ENCODE measurements at regions of chr6 and their contacts with region 1.

Region 1: DNA sequence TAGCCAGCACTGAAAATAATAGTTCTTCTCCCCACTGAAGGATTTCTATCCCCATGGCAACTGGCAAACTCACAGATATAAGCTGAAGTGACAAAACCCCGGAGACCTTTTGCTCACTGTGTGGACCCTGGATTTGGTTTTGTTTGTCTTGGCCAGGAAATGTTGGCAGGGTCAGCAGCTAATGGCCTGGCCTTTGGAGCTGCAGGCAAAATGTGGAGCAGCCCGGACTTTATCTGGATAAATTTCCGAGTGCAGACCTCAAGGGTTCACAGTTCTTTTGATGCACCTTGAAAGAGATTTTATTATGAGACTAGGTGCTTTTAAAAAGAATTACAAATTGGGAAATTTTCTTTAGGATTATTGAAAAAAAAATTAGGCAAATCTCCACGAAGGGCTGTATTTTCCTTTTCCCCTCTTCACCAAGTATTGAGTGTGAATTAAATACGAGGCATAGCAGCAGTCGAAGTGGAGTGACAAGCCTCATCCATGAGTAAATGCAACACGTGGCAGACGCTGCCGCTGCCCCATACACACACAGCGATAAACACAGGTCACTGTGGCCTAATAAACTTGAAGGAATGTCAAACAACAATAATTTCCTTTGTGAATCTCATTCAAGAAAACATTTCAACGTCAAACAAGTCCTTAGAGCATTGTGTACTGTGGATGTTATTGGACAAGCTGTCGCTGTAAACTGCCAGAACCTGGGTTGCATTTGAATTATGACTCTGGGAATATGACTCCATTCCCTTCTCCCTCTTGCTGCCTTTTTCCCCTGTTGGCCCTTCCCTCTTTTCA is 35.1 kb upstream of the CCN6 start:
- DNase-seq: peak; percentile 61
- H3K4me3 ChIP-seq: no peak overlapping the region
- H3K27ac ChIP-seq: peak overlapping the region in 1 of 2 experiments; percentile 14; a peak in 1 of 4 replicates
- H3K4me1 ChIP-seq: peaks cover 0 to 26% of the 10 kb centered on the region in 2 experiments; a peak in 2 of 4 replicates
- H3K27me3 ChIP-seq: no peaks in the 10 kb centered on the region
- CTCF ChIP-seq: no peak
- EP300 ChIP-seq: peak in 1 of 2 experiments; percentile 20; a peak in 1 of 4 replicates
- RAD21 ChIP-seq: no peak

Region 2: DNA sequence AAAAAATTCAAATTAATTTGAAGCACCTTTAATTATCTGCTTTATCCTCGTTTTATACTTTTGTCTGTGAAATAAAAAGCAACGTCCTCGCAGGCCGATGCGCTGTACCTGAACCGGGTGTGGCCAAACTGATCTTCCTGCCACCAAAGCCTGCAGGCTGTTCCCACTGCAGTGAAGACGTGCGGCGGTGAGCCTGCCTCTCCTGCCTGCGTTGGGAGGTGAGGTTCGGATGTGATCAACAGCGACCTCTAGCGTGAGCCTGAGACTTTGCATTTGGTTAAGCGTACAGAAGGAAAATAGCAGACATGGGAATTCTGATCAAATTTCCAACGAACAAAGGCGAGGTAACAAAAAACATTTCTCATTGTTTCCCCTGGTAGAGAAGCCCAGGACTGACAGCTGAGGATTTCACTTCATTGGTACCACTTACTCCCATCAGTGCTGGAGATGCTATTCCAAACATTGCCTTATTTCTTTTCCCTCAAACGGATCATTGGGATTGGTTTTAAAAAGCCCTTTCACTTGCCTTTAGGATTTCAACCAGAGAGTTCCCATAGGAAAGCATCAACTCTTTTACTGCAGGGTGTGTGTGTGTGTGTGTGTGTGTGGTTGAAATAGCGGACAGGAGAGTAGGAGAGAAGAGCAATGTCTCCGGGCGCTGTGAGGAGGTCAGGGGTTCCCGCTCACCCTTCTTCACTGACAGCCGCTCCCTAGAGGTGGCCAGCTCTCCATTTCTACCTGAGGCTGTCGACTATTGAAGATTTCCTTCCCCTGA is 21.6 kb before region 1 on chr6:
- CTCF ChIA-PET with region 1: interaction called, 20 read pairs
- POLR2A ChIA-PET with region 1: no interaction called
- DNase-seq: peak; percentile 76
- H3K4me3 ChIP-seq: peak overlapping the region in 1 of 2 experiments; percentile 40; a peak in 1 of 4 replicates
- H3K27ac ChIP-seq: no peak overlapping the region
- H3K4me1 ChIP-seq: peaks cover 4 to 12% of the 10 kb centered on the region in 2 experiments; a peak in 1 of 4 replicates
- H3K27me3 ChIP-seq: no peaks in the 10 kb centered on the region
- CTCF ChIP-seq: peak; percentile 90
- EP300 ChIP-seq: no peak
- RAD21 ChIP-seq: peak; percentile 99

Region 3: DNA sequence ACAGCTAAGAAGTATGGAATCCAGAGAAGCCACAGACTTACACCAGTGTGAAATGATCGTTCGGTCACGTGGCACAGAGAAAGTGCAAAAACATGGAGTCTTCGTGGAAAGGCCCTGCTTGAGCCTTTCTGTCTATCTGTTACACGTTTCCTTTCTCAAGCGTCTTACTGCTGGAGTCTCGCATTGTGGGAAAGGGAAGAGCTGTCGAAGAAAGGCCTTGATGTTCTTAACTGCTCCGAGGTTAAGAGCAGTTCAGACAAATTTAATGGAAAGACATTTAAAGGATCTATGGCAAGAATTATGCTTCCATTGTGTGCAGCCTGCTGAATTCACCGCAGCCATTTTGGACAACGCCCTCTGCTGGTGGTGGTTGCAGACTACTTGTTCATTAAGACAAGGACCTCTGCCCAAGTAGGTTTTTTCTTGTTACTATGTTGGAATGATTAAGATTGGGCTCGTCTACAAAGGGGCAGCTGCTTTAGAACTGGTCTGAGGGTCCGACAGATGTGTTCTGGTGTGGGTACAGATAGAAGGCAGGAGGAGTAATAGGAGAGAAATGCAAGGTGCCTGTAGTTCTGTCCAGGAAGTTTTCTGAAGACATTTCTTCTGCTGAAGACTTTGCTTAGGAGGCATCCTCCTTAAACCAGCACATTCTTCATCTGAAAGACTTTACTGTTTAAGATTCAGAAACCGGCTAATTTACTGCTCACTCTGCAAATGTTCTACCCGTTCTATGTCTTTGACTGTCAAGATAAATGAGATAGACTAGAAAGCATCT is 10.4 kb after region 1 on chr6:
- CTCF ChIA-PET with region 1: interaction called, 11 read pairs
- POLR2A ChIA-PET with region 1: no interaction called
- DNase-seq: peak; percentile 39
- H3K4me3 ChIP-seq: no peak overlapping the region
- H3K27ac ChIP-seq: no peak overlapping the region
- H3K4me1 ChIP-seq: peaks cover 8 to 10% of the 10 kb centered on the region in 2 experiments; a peak in 2 of 4 replicates
- H3K27me3 ChIP-seq: no peaks in the 10 kb centered on the region
- CTCF ChIP-seq: peak; percentile 79
- EP300 ChIP-seq: no peak
- RAD21 ChIP-seq: peak; percentile 59

Measured in SK-N-SH (cell line).